ENCODE measurements at regions of chr14 and their contacts with region 1.

Region 1: DNA sequence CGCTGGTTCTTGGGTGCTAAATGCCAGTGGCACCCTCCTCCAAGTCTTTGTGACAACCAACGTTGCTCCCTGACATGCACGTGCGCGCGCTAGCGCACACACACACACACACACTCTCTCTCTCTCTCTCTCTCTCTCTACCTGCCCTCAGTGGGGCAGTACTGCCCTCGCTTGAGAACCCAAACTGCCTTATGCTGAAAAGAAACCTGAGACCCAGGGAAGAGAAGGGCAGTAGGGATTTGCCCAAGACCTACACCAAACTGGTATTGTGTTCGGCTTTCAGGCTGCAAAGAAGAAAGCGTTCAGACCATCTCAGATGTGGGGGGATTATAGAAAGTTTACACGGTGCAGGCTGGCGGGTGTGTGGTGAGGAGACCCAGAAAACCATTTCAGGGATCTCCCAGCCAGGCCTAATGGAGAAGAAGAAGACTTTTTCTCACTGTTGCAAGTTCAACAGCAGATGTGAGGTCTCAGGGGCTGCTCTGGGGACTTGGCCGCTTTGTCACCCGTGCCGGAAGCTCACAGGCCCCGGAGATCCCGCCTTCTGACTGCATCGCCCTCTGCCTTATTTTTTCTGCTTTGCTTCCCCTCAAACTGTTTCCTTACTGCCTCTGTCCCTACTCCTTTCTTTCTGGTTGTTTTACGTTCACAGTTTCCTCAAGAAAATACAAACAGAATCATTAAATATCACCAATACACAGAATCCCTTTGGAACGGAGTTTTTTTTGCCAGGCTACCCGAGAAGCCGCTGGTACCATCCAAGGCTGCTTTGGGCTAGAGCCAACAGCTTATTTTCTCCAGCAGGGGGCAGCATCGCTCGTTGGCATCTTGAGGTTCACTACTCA is 82.4 kb downstream of the PPM1A start:
- DNase-seq: peak; percentile 90
- ATAC-seq: peak; percentile 82
- H3K4me3 Mint-ChIP-seq: peak overlapping the region; percentile 74
- H3K27ac Mint-ChIP-seq: peak overlapping the region; percentile 97
- H3K4me1 Mint-ChIP-seq: peaks cover 36% of the 10 kb centered on the region
- H3K27me3 Mint-ChIP-seq: peaks cover 34% of the 10 kb centered on the region

Region 2: DNA sequence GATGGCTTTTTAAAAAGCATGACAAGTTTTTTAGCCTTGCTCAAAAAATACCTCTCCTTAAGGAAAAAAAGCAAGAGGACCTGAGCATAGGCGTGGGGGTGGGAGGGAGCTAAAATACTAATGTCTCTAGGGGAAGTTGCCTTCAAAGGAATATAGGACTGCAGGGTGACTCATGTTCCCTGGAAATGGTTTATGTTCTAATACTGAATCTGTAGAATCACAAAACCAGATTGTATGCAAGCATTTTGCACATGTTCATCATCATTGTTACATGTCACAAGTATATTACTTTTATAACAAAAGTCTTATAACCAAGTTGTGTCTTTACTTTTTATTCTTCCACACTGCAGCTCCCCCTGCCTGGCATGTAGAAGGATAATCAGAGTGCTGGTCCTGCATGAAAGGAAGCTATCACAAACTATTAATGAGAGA is 902.8 kb before region 1 on chr14:
- CTCF ChIA-PET with region 1: no interaction called
- POLR2A ChIA-PET with region 1: no interaction called
- intact Hi-C with region 1: no loop called
- DNase-seq: no peak
- ATAC-seq: peak; percentile 68
- H3K4me3 Mint-ChIP-seq: no peak overlapping the region
- H3K27ac Mint-ChIP-seq: no peak overlapping the region
- H3K4me1 Mint-ChIP-seq: peaks cover 6% of the 10 kb centered on the region
- H3K27me3 Mint-ChIP-seq: peaks cover 3% of the 10 kb centered on the region

Region 3: DNA sequence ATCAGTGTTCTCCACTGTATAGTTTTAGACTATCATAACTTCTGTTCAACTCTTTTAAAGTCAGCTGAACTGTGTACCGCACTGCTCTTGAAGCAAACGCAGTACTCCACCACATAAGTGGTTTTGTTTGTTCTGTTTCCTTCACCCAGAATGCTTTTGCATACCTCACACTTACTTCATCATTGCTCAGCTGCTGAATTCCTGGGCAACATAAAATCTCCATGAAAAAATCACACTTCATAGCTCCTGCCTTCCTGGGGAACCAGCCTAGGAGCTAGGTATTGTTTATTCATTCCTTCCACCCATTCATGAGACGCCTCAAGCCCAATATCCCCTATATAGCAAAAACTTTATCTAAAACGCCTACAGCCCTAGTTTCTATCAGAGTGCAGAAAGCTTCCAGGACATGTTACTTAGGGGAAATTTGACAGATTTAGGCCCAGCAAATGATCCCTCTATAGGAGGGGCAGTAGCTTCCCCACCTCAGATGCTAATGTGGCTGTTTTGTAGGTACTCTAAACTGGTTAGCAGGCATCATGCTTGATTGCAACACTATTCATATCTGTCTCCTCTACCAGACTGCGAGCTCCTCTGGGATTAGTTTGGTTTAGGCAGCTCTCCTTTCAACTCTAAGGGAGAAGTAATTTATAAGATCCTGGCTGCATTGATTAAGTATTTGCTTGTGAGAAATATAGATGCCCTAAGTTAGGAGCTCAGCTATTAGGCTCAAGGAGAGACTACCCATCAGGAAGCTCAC is 367.0 kb before region 1 on chr14:
- CTCF ChIA-PET with region 1: interaction called, 5 read pairs
- POLR2A ChIA-PET with region 1: no interaction called
- intact Hi-C with region 1: loop called in 1 of 2 experiments (anchors 5 kb)
- DNase-seq: peak; percentile 3
- ATAC-seq: peak; percentile 14
- H3K4me3 Mint-ChIP-seq: peak overlapping the region; percentile 82
- H3K27ac Mint-ChIP-seq: peak overlapping the region; percentile 95
- H3K4me1 Mint-ChIP-seq: peaks cover 19% of the 10 kb centered on the region
- H3K27me3 Mint-ChIP-seq: peaks cover 5% of the 10 kb centered on the region

Region 4: GRCh38 chr14:60204843-60205774 is 126.3 kb before region 1 on chr14:
- CTCF ChIA-PET with region 1: interaction called, 4 read pairs
- POLR2A ChIA-PET with region 1: no interaction called
- intact Hi-C with region 1: loop called in 1 of 2 experiments (anchors 5 kb)
- DNase-seq: no peak
- ATAC-seq: peak; percentile 39
- H3K4me3 Mint-ChIP-seq: no peak overlapping the region
- H3K27ac Mint-ChIP-seq: peak overlapping the region; percentile 11
- H3K4me1 Mint-ChIP-seq: peaks cover 20% of the 10 kb centered on the region
- H3K27me3 Mint-ChIP-seq: peaks cover 28% of the 10 kb centered on the region

Region 5: DNA sequence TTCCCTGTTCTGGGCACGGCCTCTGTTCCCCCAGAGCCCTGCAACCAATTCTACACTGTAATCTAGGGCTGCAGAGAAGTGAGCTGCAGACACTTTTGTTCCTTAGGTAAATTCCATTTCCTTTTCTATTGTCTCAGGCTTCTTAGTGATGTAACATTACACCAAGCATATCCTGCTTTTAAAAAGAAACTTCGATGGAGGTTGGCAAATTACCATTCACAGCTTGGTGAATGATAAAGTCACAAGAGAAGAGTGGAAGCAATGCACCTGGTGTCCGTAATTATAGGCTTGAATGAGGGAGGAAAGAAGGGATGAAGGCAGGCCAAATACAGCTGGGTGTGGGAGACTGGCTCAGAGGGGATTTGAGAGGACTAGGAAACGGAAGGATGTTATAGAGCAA is 13.8 kb before region 1 on chr14:
- CTCF ChIA-PET with region 1: interaction called, 11 read pairs
- POLR2A ChIA-PET with region 1: no interaction called
- intact Hi-C with region 1: no loop called
- DNase-seq: no peak
- ATAC-seq: no peak
- H3K4me3 Mint-ChIP-seq: no peak overlapping the region
- H3K27ac Mint-ChIP-seq: no peak overlapping the region
- H3K4me1 Mint-ChIP-seq: no peaks in the 10 kb centered on the region
- H3K27me3 Mint-ChIP-seq: peaks cover 12% of the 10 kb centered on the region

Region 6: GRCh38 chr14:60514741-60515491 is 183.5 kb after region 1 on chr14:
- CTCF ChIA-PET with region 1: interaction called, 4 read pairs
- POLR2A ChIA-PET with region 1: no interaction called
- intact Hi-C with region 1: loop called in 1 of 2 experiments (anchors 1 kb)
- DNase-seq: peak; percentile 50
- ATAC-seq: peak; percentile 53
- H3K4me3 Mint-ChIP-seq: peak overlapping the region; percentile 40
- H3K27ac Mint-ChIP-seq: no peak overlapping the region
- H3K4me1 Mint-ChIP-seq: peaks cover 20% of the 10 kb centered on the region
- H3K27me3 Mint-ChIP-seq: peaks cover 52% of the 10 kb centered on the region

Region 7: GRCh38 chr14:60980811-60981632 is 649.6 kb after region 1 on chr14 and contains the starts of genes SLC38A6 and TRMT5:
- CTCF ChIA-PET with region 1: no interaction called
- POLR2A ChIA-PET with region 1: no interaction called
- intact Hi-C with region 1: loop called in 1 of 2 experiments (anchors 5 kb)
- DNase-seq: peak; percentile 94
- ATAC-seq: peak; percentile 89
- H3K4me3 Mint-ChIP-seq: no peak within 1 kb of the TSS
- H3K27ac Mint-ChIP-seq: no peak within 1 kb of the TSS
- H3K4me1 Mint-ChIP-seq: peaks cover 32% of the 10 kb centered on the region
- H3K27me3 Mint-ChIP-seq: no peaks in the 10 kb centered on the region
- total RNA-seq, gene SLC38A6: 4.5 to 5.3 TPM
- total RNA-seq, gene TRMT5: 19.7 to 20.8 TPM

Measured in activated CD4-positive, alpha-beta T cell treated with anti-CD3 and anti-CD28 coated beads for 36 hours (primary cell).